Activated naive CD8-positive, alpha-beta T cell treated with anti-CD3 and anti-CD28 coated beads, Interleukin-2, amount 10 ng/mL, durations not matched to agents 7 days and 5 days (primary cell): ENCODE measurements at regions of chr5 and their contacts with region 1.

Region 1: DNA sequence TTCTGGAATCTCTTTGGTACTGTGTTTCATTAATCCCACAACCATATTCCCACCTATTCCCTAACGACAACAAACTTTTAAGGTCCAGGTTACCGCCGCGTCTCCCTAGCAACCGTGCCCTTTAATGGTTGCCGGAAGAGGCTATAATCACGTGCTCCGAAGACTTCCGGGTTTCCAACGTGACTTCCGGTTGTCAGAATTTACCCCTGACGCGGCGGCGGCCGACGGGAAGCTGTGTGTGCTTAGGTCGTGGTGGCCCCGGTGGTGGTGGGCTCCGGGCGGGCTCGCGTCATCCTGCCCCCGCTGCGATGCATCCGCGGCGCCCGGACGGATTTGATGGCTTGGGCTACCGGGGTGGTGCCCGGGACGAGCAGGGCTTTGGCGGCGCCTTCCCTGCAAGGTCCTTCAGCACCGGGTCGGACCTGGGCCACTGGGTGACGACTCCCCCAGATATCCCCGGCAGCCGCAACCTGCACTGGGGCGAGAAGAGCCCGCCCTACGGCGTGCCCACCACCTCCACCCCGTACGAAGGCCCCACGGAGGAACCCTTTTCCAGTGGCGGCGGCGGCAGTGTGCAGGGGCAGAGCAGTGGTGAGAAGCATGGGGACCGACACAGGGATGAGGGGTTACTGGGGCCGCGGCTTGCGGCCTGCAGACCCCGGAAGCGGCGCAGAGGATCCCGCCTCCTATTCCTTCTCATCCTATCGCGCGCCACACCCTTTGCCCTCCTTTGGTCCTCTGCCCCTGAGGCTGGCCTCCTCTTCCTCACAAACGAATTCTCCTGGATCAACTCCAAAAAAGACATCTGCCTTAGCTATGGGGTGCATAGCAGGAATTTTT is at the start of gene SLC25A46:
- DNase-seq: peak; percentile 90
- ATAC-seq: peak; percentile 86
- H3K4me3 Mint-ChIP-seq: peak within 1 kb of the TSS; percentile 95
- H3K27ac Mint-ChIP-seq: peak within 1 kb of the TSS; percentile 93
- H3K4me1 Mint-ChIP-seq: peaks cover 19% of the 10 kb centered on the region
- H3K27me3 Mint-ChIP-seq: peaks cover 10% of the 10 kb centered on the region
- total RNA-seq, gene SLC25A46: 41.2 to 45.6 TPM

Region 2: GRCh38 chr5:110751902-110752762 is 13.1 kb after region 1 on chr5:
- POLR2A ChIA-PET with region 1: interaction called, 11 read pairs
- DNase-seq: no peak
- ATAC-seq: peak; percentile 93
- H3K4me3 Mint-ChIP-seq: peak overlapping the region; percentile 52
- H3K27ac Mint-ChIP-seq: peak overlapping the region; percentile 72
- H3K4me1 Mint-ChIP-seq: peaks cover 34% of the 10 kb centered on the region
- H3K27me3 Mint-ChIP-seq: no peaks in the 10 kb centered on the region